Activated CD8-positive, alpha-beta T cell treated with anti-CD3 and anti-CD28 coated beads for 36 hours (primary cell): ENCODE measurements at regions of chr4 and their contacts with region 1.

Region 1: GRCh38 chr4:55435141-55435841 is 39.5 kb downstream of the TMEM165 start:
- DNase-seq: peak; percentile 52
- ATAC-seq: peak; percentile 96
- H3K4me3 Mint-ChIP-seq: no peak overlapping the region
- H3K27ac Mint-ChIP-seq: peak overlapping the region; percentile 61
- H3K4me1 Mint-ChIP-seq: peaks cover 18% of the 10 kb centered on the region
- H3K27me3 Mint-ChIP-seq: no peaks in the 10 kb centered on the region
- CTCF ChIP-seq: peak; percentile 6

Region 2: GRCh38 chr4:55546756-55547465 is 111.6 kb after region 1 on chr4 and contains the start of gene CLOCK:
- CTCF ChIA-PET with region 1: no interaction called
- POLR2A ChIA-PET with region 1: interaction called, 4 read pairs
- intact Hi-C with region 1: loop called (anchors 10 kb)
- DNase-seq: peak; percentile 84
- ATAC-seq: peak; percentile 75
- H3K4me3 Mint-ChIP-seq: peak within 1 kb of the TSS; percentile 91
- H3K27ac Mint-ChIP-seq: peak within 1 kb of the TSS; percentile 90
- H3K4me1 Mint-ChIP-seq: peaks cover 49% of the 10 kb centered on the region
- H3K27me3 Mint-ChIP-seq: no peaks in the 10 kb centered on the region
- CTCF ChIP-seq: no peak
- total RNA-seq, gene CLOCK: 8.2 to 8.8 TPM